ENCODE measurements at regions of chr2 and their contacts with region 1.

Region 1: DNA sequence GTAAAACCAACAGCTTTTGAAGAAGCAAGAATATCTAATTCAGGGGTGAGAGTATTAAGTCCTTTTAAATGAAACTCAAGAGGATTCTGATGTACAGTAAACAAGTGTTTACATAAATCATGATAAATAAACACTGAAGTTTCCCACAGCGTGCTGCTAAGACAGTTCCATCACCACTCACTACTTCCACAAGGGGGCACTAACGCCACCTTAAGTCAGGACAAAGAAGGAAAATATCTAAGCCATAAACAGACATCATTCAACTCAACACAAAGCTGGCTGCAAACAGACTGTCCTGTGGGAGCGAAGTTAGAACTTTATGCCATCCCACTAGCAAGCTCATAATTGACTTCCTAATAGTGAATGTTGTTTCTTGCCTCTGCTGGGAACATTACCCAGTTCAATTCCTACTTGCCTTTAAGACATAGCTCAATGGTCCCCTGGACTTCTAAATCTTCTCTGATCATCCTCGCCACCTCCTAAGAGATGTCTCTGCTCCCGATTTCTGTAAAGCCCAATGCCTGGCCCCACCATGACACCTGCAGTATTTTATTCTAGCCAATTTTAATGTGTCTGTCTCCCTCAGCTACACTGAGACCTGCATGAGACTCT is 36.5 kb downstream of the MRPL44 start:
- DNase-seq: peak; percentile 81
- ATAC-seq: peak; percentile 67
- H3K4me3 ChIP-seq: no peak overlapping the region
- H3K27ac ChIP-seq: no peak overlapping the region
- H3K4me1 ChIP-seq: peaks cover 10% of the 10 kb centered on the region; the same call in 1 of the 2 replicates
- H3K27me3 ChIP-seq: no peaks in the 10 kb centered on the region
- CTCF ChIP-seq: peak; percentile 89

Region 2: GRCh38 chr2:223832241-223832903 is 161.4 kb before region 1 on chr2:
- CTCF ChIA-PET with region 1: no interaction called
- POLR2A ChIA-PET with region 1: no interaction called
- intact Hi-C with region 1: no loop called
- DNase-seq: no peak
- ATAC-seq: no peak
- H3K4me3 ChIP-seq: no peak overlapping the region
- H3K27ac ChIP-seq: no peak overlapping the region
- H3K4me1 ChIP-seq: peaks cover 13% of the 10 kb centered on the region; the same call in 1 of the 2 replicates
- H3K27me3 ChIP-seq: no peaks in the 10 kb centered on the region
- CTCF ChIP-seq: no peak

Region 3: DNA sequence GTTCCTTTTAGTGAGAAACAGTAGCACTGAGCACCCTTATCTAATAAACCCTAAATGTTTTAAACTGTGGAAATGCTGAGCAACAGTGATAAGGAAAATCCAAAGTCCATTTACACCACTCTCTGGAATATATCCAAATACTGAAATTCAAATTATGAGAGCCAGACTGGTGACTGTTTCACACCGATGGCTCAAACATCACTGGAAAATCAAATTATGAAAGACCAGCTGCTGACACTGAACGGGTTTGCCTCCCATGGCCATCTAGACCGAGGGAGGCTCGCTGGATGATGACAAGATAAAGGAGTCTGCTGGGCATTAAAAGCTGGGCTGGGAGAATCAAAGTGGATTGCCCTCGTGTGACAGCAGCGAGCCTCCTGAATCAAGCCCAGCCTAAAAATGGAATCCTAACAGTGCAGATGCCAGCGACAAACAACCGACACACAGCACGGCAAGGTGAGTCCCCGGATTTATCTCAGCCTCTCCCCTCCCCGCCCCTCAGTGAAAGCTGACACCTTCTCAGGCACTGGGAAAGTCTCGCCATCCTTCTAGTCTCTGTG is 15.1 kb after region 1 on chr2:
- CTCF ChIA-PET with region 1: no interaction called
- POLR2A ChIA-PET with region 1: no interaction called
- intact Hi-C with region 1: no loop called
- DNase-seq: no peak
- ATAC-seq: no peak
- H3K4me3 ChIP-seq: no peak overlapping the region
- H3K27ac ChIP-seq: no peak overlapping the region
- H3K4me1 ChIP-seq: peaks cover 11% of the 10 kb centered on the region
- H3K27me3 ChIP-seq: no peaks in the 10 kb centered on the region
- CTCF ChIP-seq: no peak

Region 4: GRCh38 chr2:224023188-224023587 is 29.5 kb after region 1 on chr2:
- CTCF ChIA-PET with region 1: interaction called, 3 read pairs
- POLR2A ChIA-PET with region 1: interaction called, 3 read pairs
- intact Hi-C with region 1: loop called (anchors 1 kb)
- DNase-seq: peak; percentile 77
- ATAC-seq: peak; percentile 97
- H3K4me3 ChIP-seq: no peak overlapping the region
- H3K27ac ChIP-seq: peak overlapping the region; percentile 52
- H3K4me1 ChIP-seq: peaks cover 16% of the 10 kb centered on the region
- H3K27me3 ChIP-seq: no peaks in the 10 kb centered on the region
- CTCF ChIP-seq: no peak

Region 5: GRCh38 chr2:224086226-224086914 is 92.6 kb after region 1 on chr2:
- CTCF ChIA-PET with region 1: no interaction called
- POLR2A ChIA-PET with region 1: no interaction called
- intact Hi-C with region 1: loop called (anchors 2 kb)
- DNase-seq: peak; percentile 96
- ATAC-seq: peak; percentile 88
- H3K4me3 ChIP-seq: peak overlapping the region; percentile 55
- H3K27ac ChIP-seq: peak overlapping the region; percentile 97
- H3K4me1 ChIP-seq: peaks cover 35% of the 10 kb centered on the region
- H3K27me3 ChIP-seq: no peaks in the 10 kb centered on the region
- CTCF ChIP-seq: no peak

Region 6: DNA sequence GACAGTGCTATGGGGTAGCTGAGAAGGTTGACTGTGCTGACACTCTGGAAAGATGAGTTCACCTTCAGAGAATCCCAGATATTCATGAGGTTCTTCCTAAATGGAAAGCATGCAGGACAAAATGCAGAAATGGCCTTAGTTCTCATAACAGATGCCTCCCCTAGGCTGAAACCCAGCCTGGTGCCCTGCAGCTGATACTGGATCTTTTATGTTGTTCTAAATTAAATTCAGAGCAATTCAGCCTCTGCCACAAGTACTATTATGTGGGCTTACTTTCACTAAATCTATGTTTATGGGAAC is 217.4 kb after region 1 on chr2:
- CTCF ChIA-PET with region 1: no interaction called
- POLR2A ChIA-PET with region 1: no interaction called
- intact Hi-C with region 1: no loop called
- DNase-seq: no peak
- ATAC-seq: no peak
- H3K4me3 ChIP-seq: no peak overlapping the region
- H3K27ac ChIP-seq: no peak overlapping the region
- H3K4me1 ChIP-seq: no peaks in the 10 kb centered on the region
- H3K27me3 ChIP-seq: no peaks in the 10 kb centered on the region
- CTCF ChIP-seq: no peak

Region 7: GRCh38 chr2:224221455-224221913 is 227.8 kb after region 1 on chr2:
- CTCF ChIA-PET with region 1: no interaction called
- POLR2A ChIA-PET with region 1: no interaction called
- intact Hi-C with region 1: loop called (anchors 1 kb)
- DNase-seq: peak; percentile 97
- ATAC-seq: peak; percentile 90
- H3K4me3 ChIP-seq: no peak overlapping the region
- H3K27ac ChIP-seq: peak overlapping the region; percentile 84
- H3K4me1 ChIP-seq: peaks cover 28% of the 10 kb centered on the region
- H3K27me3 ChIP-seq: no peaks in the 10 kb centered on the region
- CTCF ChIP-seq: no peak

Region 8: GRCh38 chr2:224347176-224348051 is 353.7 kb after region 1 on chr2:
- CTCF ChIA-PET with region 1: interaction called, 7 read pairs
- POLR2A ChIA-PET with region 1: no interaction called
- intact Hi-C with region 1: loop called (anchors 1 kb)
- DNase-seq: peak; percentile 28
- ATAC-seq: peak; percentile 85
- H3K4me3 ChIP-seq: no peak overlapping the region
- H3K27ac ChIP-seq: no peak overlapping the region
- H3K4me1 ChIP-seq: no peaks in the 10 kb centered on the region; the same call in 1 of the 2 replicates
- H3K27me3 ChIP-seq: no peaks in the 10 kb centered on the region
- CTCF ChIP-seq: peak; percentile 27